Caco-2 (cell line): ENCODE measurements at regions of chr17 and their contacts with region 1.

Region 1: DNA sequence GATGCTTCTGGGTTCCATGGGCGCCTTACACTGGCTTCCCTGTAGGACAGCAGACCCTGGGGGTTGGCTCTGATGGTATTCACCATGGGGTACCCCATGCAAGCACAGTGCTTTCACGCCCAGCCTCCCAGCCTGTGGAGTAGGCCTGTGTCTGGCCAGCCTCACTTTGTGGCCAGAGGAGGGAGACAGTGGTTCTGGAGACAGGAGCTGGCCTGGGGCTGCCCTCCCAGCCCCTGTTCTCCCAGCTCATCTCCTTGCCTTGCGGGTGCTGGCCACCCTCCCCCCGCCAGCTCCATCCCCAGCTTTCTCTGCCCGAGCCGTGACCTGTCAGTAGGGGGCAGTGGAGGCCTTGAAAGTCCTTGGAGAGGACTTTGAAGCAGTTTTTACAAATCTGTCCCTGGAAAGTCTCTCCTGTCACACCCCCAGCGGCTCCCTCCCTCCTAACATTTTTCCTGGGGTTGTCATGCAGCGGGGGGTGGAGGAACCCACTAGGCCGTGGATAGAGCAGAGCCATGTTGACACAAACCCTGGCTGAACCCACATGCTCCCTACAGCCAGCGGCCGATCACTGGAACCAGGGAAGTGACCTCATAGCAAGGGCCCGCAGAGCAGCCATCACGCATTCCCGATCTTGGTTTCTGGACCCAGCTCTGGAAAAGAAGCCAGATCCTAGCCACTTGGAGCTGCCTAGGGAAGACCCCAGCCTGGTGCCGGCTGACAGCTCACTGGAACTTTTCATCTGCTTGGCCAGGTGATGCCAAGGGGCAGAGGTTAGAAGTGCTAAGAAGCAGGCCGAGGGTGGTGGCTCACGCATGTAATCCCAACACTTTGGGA is 289.4 kb downstream of the SEC14L1 start:
- DNase-seq: peak; percentile 90 to 92
- H3K4me3 ChIP-seq: no peak overlapping the region
- H3K4me3 Mint-ChIP-seq: no peak overlapping the region
- H3K27ac Mint-ChIP-seq: no peak overlapping the region
- H3K4me1 ChIP-seq: peaks cover 21% of the 10 kb centered on the region
- H3K4me1 Mint-ChIP-seq: peaks cover 24% of the 10 kb centered on the region
- H3K27me3 ChIP-seq: no peaks in the 10 kb centered on the region
- H3K27me3 Mint-ChIP-seq: no peaks in the 10 kb centered on the region
- CTCF ChIP-seq: peak; percentile 78 to 82

Region 2: DNA sequence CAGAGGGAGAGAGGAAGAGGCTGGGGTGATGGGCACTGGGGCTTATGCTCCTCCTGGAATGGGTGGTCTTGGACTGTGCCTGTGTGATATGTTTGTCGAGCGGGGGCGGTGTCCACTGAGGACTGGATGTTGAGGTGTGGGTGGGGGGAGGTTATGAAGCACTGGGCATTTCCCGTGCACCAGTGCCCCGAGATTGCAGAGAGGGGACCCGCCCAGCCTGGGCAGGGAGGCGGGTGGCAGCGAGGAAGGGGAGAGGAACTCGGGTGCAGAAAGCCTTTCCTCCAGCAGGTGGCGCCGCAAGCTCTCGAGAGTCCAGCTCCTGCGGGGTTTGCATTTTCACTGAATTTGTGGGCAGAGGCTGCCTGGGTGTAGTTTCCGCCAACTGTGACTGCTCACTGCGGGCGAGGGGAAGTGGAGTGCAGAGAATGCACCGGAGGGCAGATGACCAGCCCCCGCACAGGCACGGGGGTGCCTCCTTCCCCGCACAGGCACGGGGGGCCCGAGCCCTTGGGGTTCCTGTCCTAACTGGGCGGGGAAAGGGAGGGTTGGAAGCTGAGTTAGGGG is 98.8 kb before region 1 on chr17:
- CTCF ChIA-PET with region 1: interaction called, 20 read pairs
- POLR2A ChIA-PET with region 1: no interaction called
- intact Hi-C with region 1: loop called (anchors 1 kb)
- DNase-seq: peak; percentile 83 to 89
- H3K4me3 ChIP-seq: no peak overlapping the region
- H3K4me3 Mint-ChIP-seq: peak overlapping the region; percentile 41
- H3K27ac Mint-ChIP-seq: peak overlapping the region; percentile 56
- H3K4me1 ChIP-seq: peaks cover 15% of the 10 kb centered on the region
- H3K4me1 Mint-ChIP-seq: peaks cover 34% of the 10 kb centered on the region
- H3K27me3 ChIP-seq: no peaks in the 10 kb centered on the region
- H3K27me3 Mint-ChIP-seq: no peaks in the 10 kb centered on the region
- CTCF ChIP-seq: peak; percentile 91 to 94

Region 3: DNA sequence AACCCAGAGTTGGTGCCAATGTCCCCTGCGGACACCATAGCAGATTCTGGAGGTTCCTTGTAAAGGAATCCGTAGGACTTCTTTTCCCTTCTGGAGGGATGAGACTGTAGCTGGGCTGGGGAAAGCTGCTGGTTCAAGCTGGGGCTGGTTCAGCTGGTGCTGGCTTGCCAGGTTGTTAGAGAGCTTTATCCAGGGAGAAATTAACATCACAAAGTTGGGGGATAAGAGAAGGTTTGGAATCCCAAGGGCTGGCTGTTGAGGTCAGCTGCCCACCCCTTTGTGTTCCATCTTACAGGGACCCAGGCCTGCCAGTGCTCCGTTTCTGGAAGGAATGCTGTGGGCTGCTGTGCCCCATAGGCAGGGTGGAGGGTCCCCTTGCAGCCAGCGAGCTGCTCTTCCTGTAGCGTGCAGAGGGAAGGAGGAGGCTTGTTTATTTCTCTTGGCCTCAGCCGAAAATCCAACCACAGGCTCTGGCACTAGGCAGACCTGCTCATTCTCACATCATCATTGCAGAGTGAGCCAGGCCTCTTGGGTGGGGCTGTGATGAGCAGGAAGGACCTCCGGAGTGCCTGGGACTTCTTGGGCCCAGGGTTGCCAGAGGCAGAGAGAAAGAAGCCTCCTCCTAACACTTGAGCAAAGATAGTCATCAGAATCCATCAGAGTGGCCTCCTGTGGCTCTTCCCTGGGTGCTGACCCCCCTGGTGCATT is 38.3 kb before region 1 on chr17:
- CTCF ChIA-PET with region 1: interaction called, 8 read pairs
- POLR2A ChIA-PET with region 1: interaction called, 15 read pairs
- intact Hi-C with region 1: no loop called
- DNase-seq: no peak
- H3K4me3 ChIP-seq: no peak overlapping the region
- H3K4me3 Mint-ChIP-seq: peak overlapping the region; percentile 19
- H3K27ac Mint-ChIP-seq: peak overlapping the region; percentile 80
- H3K4me1 ChIP-seq: peaks cover 70% of the 10 kb centered on the region
- H3K4me1 Mint-ChIP-seq: peaks cover 53% of the 10 kb centered on the region
- H3K27me3 ChIP-seq: no peaks in the 10 kb centered on the region
- H3K27me3 Mint-ChIP-seq: no peaks in the 10 kb centered on the region
- CTCF ChIP-seq: no peak

Region 4: DNA sequence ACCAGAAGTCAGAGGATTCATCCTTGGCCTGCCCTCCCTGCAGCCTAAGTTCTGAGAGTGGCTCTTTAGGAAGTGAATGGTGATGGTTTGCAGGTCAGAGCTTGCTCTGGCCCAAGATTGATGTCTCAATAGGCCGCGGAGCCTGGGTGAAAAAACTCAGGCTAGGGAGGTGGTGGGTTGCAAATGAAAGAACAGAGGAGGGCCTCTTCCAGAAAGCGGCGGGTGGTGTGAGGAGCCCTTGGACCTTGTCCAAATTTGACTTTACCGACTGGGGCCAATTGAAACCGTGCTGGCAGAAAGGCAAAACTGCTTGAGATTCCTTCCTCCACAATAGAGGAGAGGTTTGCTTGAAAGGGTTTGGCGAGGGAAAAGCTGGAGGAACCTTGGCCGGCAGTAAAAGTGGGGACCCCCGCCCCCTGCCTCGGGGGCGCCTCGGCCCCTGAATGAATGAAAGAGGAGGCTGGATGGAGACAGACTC is 41.9 kb after region 1 on chr17:
- CTCF ChIA-PET with region 1: interaction called, 11 read pairs
- POLR2A ChIA-PET with region 1: no interaction called
- intact Hi-C with region 1: loop called (anchors 5 kb)
- DNase-seq: no peak
- H3K4me3 ChIP-seq: no peak overlapping the region
- H3K4me3 Mint-ChIP-seq: peak overlapping the region; percentile 42
- H3K27ac Mint-ChIP-seq: peak overlapping the region; percentile 96
- H3K4me1 ChIP-seq: peaks cover 49% of the 10 kb centered on the region
- H3K4me1 Mint-ChIP-seq: peaks cover 64% of the 10 kb centered on the region
- H3K27me3 ChIP-seq: no peaks in the 10 kb centered on the region
- H3K27me3 Mint-ChIP-seq: no peaks in the 10 kb centered on the region
- CTCF ChIP-seq: no peak